Body of pancreas (tissue), 4 donors: ENCODE measurements at regions of chr14 and their contacts with region 1.

Region 1: DNA sequence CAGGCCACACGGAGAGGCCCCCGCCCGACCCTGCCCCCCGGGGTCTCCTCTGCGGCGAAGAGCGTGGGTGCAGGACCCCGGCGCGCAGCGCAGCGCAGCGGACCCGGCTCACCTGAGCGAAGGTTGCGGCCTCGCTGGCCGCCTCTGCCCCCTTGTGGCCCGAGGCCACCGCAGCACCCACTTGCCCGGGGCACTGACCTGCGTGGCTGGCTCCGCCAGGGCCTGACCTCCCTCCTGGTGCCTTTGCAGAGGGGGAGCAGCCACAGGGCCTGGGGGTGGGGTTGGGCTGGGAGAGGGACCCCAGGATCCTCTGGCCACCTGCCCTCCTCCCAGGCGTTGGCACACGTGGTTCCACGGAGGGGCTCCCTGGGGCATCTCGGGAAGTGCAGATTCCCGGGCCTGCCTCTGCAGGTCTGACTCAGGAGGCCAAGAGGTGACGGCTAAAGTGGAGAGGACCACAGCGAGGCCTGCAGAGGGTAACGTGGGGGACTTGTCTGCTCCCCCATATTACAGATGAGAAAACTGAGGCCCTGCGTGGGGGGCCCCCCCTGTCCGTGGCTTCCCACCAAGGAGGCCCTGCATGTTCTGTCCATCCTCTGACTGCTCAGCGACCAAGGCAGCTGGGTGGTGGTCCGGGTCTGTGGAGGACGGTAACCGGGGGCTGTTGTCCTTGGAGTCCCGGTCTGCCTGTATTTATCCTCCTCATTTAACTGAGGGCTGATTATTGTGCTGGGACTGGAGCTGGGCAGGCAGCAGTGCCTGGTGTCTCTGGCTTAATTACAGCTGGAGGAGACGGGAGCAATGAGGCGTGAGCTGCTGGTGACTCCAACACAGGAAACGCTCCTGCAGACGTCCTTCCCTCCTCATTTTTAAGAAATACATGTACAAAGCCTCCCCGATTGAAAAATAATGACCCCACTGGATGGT is 67.9 kb upstream of the BEGAIN start:
- DNase-seq: peak; percentile 51 to 72 (median 68)
- ATAC-seq: peak; percentile 61
- H3K4me3 ChIP-seq: no peak overlapping the region
- H3K27ac ChIP-seq: no peak overlapping the region
- H3K4me1 ChIP-seq: peaks cover 35% of the 10 kb centered on the region
- H3K27me3 ChIP-seq: no peaks in the 10 kb centered on the region
- CTCF ChIP-seq: peak; percentile 61 to 83 (median 78)
- POLR2A ChIP-seq: no peak

Region 2: GRCh38 chr14:100383727-100384158 is 271.3 kb before region 1 on chr14:
- intact Hi-C with region 1: loop called (anchors 10 kb)
- DNase-seq: peak; percentile 71 to 73 (median 72)
- ATAC-seq: peak; percentile 77
- H3K4me3 ChIP-seq: no peak overlapping the region
- H3K27ac ChIP-seq: no peak overlapping the region
- H3K4me1 ChIP-seq: peaks cover 8% of the 10 kb centered on the region
- H3K27me3 ChIP-seq: no peaks in the 10 kb centered on the region
- CTCF ChIP-seq: peak; percentile 67 to 79 (median 76)
- POLR2A ChIP-seq: no peak

Region 3: GRCh38 chr14:100871234-100872186 is 216.4 kb after region 1 on chr14:
- intact Hi-C with region 1: no loop called
- DNase-seq: no peak
- ATAC-seq: no peak
- H3K4me3 ChIP-seq: no peak overlapping the region
- H3K27ac ChIP-seq: no peak overlapping the region
- H3K4me1 ChIP-seq: no peaks in the 10 kb centered on the region
- H3K27me3 ChIP-seq: no peaks in the 10 kb centered on the region
- CTCF ChIP-seq: no peak
- POLR2A ChIP-seq: no peak